CD8-positive, alpha-beta T cell (primary cell): ENCODE measurements at regions of chr15 and their contacts with region 1.

Region 1: GRCh38 chr15:70810916-70811578 is 42.9 kb downstream of the LARP6 start:
- DNase-seq: no peak
- ATAC-seq: no peak
- H3K4me3 ChIP-seq: no peak overlapping the region
- H3K4me3 Mint-ChIP-seq: no peak overlapping the region
- H3K27ac ChIP-seq: no peak overlapping the region
- H3K27ac Mint-ChIP-seq: no peak overlapping the region
- H3K4me1 ChIP-seq: no peaks in the 10 kb centered on the region
- H3K4me1 Mint-ChIP-seq: peaks cover 4% of the 10 kb centered on the region
- H3K27me3 ChIP-seq: no peaks in the 10 kb centered on the region
- H3K27me3 Mint-ChIP-seq: peaks cover 10% of the 10 kb centered on the region
- CTCF ChIP-seq: no peak

Region 2: GRCh38 chr15:70799667-70800450 is 11.2 kb before region 1 on chr15:
- CTCF ChIA-PET with region 1: interaction called, 14 read pairs
- POLR2A ChIA-PET with region 1: interaction called, 3 read pairs
- intact Hi-C with region 1: no loop called
- DNase-seq: no peak
- ATAC-seq: no peak
- H3K4me3 ChIP-seq: no peak overlapping the region
- H3K4me3 Mint-ChIP-seq: no peak overlapping the region
- H3K27ac ChIP-seq: no peak overlapping the region
- H3K27ac Mint-ChIP-seq: no peak overlapping the region
- H3K4me1 ChIP-seq: no peaks in the 10 kb centered on the region
- H3K4me1 Mint-ChIP-seq: no peaks in the 10 kb centered on the region
- H3K27me3 ChIP-seq: no peaks in the 10 kb centered on the region
- H3K27me3 Mint-ChIP-seq: peaks cover 3% of the 10 kb centered on the region
- CTCF ChIP-seq: no peak

Region 3: DNA sequence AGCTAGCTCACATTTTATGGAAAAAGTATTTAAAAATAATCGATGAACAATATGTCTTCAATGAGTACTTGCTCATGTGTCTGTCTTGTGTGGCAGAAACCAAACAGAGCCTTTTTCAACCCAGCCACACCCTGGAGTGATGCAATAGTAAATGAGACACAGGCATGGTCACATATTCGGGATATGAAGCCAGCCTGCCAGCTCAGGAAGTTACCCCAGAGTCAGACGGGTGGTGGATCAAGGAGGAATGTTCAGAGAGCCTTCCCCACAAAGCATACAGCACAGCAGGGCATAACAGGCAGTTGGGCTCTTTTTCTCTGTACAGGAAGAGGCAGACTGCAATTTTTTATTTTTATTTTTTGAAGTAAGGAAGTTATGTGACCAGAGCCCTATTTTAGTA is 15.6 kb after region 1 on chr15:
- CTCF ChIA-PET with region 1: interaction called, 30 read pairs
- POLR2A ChIA-PET with region 1: no interaction called
- intact Hi-C with region 1: no loop called
- DNase-seq: no peak
- ATAC-seq: no peak
- H3K4me3 ChIP-seq: no peak overlapping the region
- H3K4me3 Mint-ChIP-seq: no peak overlapping the region
- H3K27ac ChIP-seq: no peak overlapping the region
- H3K27ac Mint-ChIP-seq: no peak overlapping the region
- H3K4me1 ChIP-seq: no peaks in the 10 kb centered on the region
- H3K4me1 Mint-ChIP-seq: no peaks in the 10 kb centered on the region
- H3K27me3 ChIP-seq: peaks cover 0 to 2% of the 10 kb centered on the region in 2 experiments
- H3K27me3 Mint-ChIP-seq: peaks cover 14% of the 10 kb centered on the region
- CTCF ChIP-seq: no peak